ENCODE measurements at regions of chr17 and their contacts with region 1.

Region 1: DNA sequence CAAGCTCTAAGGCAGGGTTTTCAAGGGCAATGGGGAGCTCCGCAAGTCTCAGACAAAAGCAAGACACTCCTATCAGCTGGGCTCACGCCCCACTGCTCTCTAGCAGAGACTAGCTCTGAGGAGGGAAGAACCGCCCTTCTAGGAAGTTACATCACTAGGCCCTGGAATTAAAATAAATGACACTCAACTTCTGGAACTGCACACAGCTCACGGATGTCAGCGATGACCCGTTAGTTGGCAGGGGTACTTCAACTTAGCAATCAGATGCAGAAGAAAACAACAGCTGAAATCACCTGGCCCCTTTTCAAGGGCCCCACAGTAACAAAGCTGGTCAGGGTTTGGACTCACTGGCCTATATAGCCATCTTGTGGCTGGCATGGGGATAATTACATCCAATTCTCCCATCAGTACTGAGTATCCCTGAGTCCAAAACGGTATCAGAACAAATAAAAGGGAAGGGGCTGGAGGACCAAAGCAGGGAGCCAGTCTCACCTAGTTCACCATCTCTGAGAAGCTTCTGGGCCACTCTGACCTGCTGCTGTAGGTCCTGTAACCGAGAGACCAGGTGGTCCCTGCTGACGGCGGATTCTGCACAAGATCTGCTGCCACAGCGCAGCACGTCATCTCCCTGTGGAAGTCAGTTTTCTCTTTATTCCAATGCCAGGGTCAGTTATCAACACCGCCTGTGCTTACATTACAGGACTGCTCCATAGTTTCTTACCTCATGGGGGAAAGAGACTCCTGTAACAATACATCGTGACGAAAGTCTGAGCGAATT is 22.2 kb downstream of the SERPINF1 start:
- DNase-seq: no peak
- H3K4me3 ChIP-seq: no peak overlapping the region
- H3K27me3 ChIP-seq: no peaks in the 10 kb centered on the region
- CTCF ChIP-seq: peak; percentile 84

Region 2: GRCh38 chr17:1298606-1299005 is 485.4 kb before region 1 on chr17:
- CTCF ChIA-PET with region 1: no interaction called
- POLR2A ChIA-PET with region 1: no interaction called
- DNase-seq: no peak
- H3K4me3 ChIP-seq: no peak overlapping the region
- H3K27me3 ChIP-seq: peaks cover 11% of the 10 kb centered on the region
- CTCF ChIP-seq: no peak

Region 3: GRCh38 chr17:1716076-1716995 is 67.7 kb before region 1 on chr17:
- CTCF ChIA-PET with region 1: interaction called, 224 read pairs
- POLR2A ChIA-PET with region 1: interaction called, 6 read pairs
- DNase-seq: peak; percentile 100
- H3K4me3 ChIP-seq: peak overlapping the region; percentile 97
- H3K27me3 ChIP-seq: no peaks in the 10 kb centered on the region
- CTCF ChIP-seq: peak; percentile 37

Region 4: DNA sequence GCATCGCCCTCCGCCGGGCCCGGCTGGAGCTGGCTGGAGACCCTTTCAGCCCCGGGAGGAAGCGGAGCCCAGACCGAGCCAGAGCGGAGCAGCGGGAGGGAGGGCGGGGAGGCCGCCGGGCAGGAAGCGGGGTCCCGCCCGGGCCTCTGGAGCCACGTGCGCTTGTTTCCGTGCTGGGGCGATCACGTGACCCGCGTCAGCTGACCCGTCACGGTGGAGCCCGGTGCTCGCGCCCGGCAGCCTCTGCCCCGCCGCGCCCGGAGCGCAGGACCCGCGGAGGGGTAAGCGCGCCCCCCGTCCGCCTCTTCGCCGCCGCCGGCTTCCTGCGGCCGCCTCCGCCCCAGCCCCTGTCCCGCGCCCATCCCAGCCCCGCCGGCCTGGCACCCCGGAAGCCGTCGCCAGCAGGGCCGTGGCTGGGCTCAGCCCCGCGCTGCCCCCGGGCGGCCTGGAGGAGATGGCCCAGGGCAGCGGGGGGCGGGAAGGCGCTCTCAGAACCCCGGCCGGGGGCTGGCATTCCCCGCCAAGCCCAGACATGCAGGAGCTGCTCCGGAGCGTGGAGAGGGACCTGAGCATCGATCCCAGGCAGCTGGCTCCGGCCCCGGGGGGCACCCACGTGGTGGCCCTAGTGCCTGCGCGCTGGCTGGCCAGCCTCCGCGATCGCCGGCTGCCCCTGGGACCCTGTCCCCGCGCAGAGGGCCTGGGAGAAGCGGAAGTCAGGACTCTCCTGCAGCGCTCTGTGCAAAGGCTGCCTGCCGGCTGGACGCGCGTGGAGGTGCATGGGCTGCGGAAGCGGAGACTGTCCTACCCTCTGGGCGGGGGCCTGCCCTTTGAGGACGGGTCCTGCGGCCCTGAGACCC is 59.3 kb before region 1 on chr17 and contains the start of gene WDR81:
- CTCF ChIA-PET with region 1: interaction called, 224 read pairs
- POLR2A ChIA-PET with region 1: no interaction called
- DNase-seq: no peak
- H3K4me3 ChIP-seq: peak within 1 kb of the TSS; percentile 65
- H3K27me3 ChIP-seq: no peaks in the 10 kb centered on the region
- CTCF ChIP-seq: no peak
- polyA plus RNA-seq, gene WDR81: 3.0 and 4.8 TPM in 2 replicates

Region 5: DNA sequence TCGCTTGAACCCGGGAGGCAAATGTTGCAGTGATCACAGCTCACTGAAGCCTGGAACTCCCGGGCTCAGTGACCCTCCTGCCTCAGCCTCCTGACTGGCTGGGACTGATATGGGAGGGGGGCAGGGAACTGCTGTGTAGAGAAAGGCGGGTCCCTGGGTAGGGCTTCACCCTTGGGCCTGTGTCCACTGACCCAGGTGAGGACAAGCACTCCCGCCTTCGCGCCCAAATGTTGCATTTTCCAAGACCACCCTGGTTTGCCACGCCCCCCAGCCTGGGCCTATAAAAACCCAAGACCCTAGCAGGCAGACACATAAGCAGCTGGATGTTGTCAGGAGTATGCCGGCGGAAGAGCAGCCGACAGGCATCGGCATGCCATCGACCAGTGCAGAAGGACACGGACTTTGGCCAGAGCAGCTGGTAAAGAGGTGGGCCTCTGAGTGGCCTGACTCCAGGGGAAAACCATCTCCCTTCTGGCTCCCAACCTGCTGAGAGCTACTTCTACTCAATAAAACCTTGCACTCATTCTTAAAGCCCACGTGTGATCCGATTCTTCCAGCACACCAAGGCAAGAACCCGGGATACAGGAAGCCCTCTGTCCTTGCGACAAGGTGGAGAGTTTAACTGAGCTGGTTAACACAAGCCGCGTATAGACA is 26.6 kb after region 1 on chr17:
- CTCF ChIA-PET with region 1: no interaction called
- POLR2A ChIA-PET with region 1: no interaction called
- DNase-seq: no peak
- H3K4me3 ChIP-seq: no peak overlapping the region
- H3K27me3 ChIP-seq: no peaks in the 10 kb centered on the region
- CTCF ChIP-seq: no peak

Region 6: DNA sequence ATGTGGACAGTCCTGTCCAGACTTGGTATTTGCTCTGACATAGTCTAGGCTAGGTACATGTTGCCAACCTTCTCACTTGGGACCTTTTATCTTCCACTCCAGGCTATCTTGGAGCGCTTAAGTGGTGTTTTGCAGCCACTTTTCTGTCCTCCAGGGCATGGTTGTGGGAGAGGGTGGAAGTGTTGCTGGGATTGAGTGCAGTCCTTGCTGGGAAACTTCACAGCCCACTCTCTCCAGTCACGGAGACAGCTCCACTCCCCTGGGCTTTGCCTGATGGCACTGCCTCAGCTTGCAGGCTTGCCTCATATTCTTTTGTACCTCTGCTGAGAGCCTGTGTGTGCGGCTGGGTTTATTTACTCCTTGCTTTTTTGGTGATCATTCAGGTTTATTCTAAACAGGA is 63.2 kb after region 1 on chr17:
- CTCF ChIA-PET with region 1: no interaction called
- POLR2A ChIA-PET with region 1: no interaction called
- DNase-seq: no peak
- H3K4me3 ChIP-seq: no peak overlapping the region
- H3K27me3 ChIP-seq: no peaks in the 10 kb centered on the region
- CTCF ChIP-seq: no peak

Region 7: GRCh38 chr17:1931759-1932579 is 147.9 kb after region 1 on chr17:
- CTCF ChIA-PET with region 1: no interaction called
- POLR2A ChIA-PET with region 1: no interaction called
- DNase-seq: no peak
- H3K4me3 ChIP-seq: no peak overlapping the region
- H3K27me3 ChIP-seq: peaks cover 2% of the 10 kb centered on the region; the same call in 1 of the 2 replicates
- CTCF ChIP-seq: no peak

Measured in BJ (cell line).